ENCODE measurements at regions of chr3 and their contacts with region 1.

Region 1: GRCh38 chr3:115099986-115100571 is 47.0 kb downstream of the ZBTB20 start:
- DNase-seq: no peak
- ATAC-seq: peak; percentile 89 to 97

Region 2: DNA sequence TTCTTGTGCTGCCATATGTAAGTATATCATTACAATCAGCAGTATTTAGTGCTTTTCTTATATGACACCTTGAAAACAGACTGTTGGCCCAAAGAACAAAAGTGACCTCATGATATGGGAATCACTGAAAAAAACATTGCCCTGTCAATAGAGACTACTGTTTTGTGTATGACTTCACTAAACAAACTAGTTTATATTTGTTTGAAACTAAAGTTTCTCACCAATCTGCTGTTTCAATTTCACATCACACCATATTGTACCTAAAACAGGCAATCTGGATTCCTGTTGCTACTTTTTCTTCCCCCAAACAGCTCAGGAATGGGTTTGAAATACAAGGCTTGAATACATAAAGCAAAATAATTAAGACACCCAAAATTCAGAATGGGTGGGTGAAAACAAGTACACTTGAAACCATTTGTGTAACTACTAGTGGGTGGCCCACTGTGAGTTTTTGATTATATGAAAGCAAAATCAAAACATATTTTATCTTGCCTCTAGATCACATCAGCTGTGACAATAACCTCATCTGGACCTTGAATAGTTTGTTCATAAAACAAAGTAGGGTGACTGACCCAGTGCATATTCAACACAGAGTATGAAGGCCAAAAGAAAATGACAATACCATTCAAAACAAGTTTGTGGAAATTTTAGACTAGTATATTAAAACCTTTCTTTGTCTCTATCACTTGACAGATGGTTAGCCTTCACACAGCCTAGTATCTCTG is 41.1 kb after region 1 on chr3:
- intact Hi-C with region 1: loop called in 1 of 2 experiments (anchors 5 kb)
- DNase-seq: no peak
- ATAC-seq: no peak

Region 3: DNA sequence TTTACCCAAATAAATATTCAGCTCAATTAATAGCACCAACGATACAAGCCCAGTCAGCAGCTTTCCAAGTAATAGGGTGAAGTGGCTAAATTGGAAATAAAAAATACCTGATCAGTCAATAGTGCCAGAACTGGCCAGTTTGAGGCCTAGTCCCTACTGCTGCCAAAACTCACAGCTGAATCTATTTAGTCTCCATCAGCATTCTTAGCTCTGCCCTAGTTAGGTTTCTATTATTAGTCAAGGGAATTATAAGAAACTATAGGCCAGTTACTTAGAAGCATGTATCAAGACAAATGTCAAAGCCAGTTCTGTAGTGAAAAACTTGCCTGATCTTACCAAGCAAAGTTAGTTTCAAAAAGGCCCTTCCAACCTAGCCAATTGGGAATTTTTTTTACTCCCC is 193.2 kb after region 1 on chr3:
- intact Hi-C with region 1: no loop called
- DNase-seq: no peak
- ATAC-seq: peak; percentile 35 to 72

Measured in left cardiac atrium (tissue), 4 donors.